WTC11 (cell line): ENCODE measurements at regions of chr2 and their contacts with region 1.

Region 1: GRCh38 chr2:24827321-24828237 is 34.4 kb downstream of the CENPO start:
- DNase-seq: peak; percentile 89
- ATAC-seq: peak; percentile 89
- H3K4me3 Mint-ChIP-seq: no peak overlapping the region
- H3K27ac Mint-ChIP-seq: peak overlapping the region; percentile 90
- H3K4me1 Mint-ChIP-seq: peaks cover 33% of the 10 kb centered on the region
- H3K27me3 Mint-ChIP-seq: no peaks in the 10 kb centered on the region; the same call in 1 of the 2 replicates
- CTCF ChIP-seq: peak; percentile 77

Region 2: GRCh38 chr2:24409700-24410556 is 417.7 kb before region 1 on chr2:
- CTCF ChIA-PET with region 1: interaction called, 26 read pairs
- POLR2A ChIA-PET with region 1: no interaction called
- DNase-seq: peak; percentile 21
- ATAC-seq: peak; percentile 91
- H3K4me3 Mint-ChIP-seq: no peak overlapping the region
- H3K27ac Mint-ChIP-seq: no peak overlapping the region
- H3K4me1 Mint-ChIP-seq: peaks cover 10% of the 10 kb centered on the region
- H3K27me3 Mint-ChIP-seq: no peaks in the 10 kb centered on the region
- CTCF ChIP-seq: peak; percentile 54; the same call in 1 of the 2 replicates

Region 3: DNA sequence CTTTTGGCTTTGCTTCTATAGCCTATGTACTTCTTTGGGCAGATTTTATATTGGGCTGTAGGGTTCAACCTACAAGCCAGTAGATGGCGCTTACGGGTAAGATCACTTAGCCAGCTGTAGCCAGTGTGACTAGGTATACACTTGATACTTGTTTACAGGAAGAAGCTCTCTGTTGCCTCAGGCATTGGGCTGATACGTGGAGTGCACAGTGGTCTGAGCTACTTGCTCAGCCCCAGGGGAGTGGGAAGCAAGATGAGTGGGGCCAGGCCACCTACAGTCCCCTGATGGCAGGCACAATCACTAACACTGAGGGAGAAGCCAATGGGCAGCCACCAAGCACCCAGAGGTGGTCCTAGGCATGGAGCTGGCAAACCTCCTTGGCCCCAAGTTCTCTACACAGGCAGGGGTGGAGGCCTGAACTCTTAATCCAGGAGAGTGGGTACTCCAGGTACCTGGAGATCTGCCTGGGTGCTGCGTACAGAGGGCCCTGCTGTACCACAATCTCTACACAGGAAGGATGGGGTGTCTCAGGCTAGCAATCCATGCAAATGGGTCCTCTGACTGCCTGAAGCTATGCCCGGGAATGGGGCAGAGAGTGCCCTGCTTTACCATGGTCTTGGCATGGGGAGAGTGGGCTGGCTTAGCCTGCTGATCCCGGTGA is 214.3 kb before region 1 on chr2:
- CTCF ChIA-PET with region 1: interaction called, 42 read pairs
- POLR2A ChIA-PET with region 1: interaction called, 3 read pairs
- DNase-seq: peak; percentile 46
- ATAC-seq: peak; percentile 93
- H3K4me3 Mint-ChIP-seq: no peak overlapping the region
- H3K27ac Mint-ChIP-seq: peak overlapping the region; percentile 97
- H3K4me1 Mint-ChIP-seq: peaks cover 33% of the 10 kb centered on the region
- H3K27me3 Mint-ChIP-seq: no peaks in the 10 kb centered on the region
- CTCF ChIP-seq: peak; percentile 56; the same call in 1 of the 2 replicates

Region 4: DNA sequence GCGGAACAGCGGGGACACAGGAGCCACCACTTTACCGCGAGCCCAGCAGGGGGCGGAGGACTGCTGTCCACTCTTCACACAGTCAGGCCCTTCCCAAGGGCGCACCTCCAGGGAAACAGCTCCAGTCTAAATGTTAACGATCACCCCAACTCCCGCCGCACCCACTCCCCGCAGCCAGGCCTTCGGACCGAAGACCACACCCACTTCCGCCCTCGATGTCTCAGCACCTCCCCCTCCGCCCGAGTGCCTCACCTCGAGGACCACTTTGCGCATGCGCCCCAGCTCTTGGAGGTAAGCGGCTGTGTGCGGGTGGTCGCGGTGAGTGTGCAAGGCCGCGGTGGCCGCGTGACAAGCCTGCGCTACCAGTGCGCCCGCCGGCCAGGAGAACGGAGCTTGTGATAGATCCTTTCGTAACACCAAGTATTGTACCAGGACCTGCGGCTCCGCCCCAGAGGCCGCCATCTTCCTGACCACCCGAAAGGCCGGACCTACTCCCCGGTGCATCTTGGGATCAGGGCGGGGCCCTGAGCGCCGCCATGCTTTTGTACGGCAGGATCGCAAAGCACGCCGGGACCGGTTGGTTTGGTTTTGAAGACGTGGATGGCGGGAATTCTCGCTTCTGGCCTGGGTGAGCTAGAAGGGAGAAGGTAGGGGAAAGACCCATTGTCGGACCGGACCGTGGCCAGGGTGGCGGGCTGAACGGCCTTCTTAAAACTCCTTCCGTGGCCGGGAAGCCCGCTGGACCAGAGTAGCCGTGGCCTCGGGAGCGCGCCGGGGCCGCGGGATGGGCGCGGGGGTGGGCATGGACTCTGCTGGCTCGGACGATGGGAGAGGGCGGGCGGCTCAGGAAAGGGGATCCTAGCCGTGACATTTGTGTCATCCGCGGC is 34.5 kb before region 1 on chr2 and contains the starts of genes CENPO and PTRHD1:
- CTCF ChIA-PET with region 1: interaction called, 10 read pairs
- POLR2A ChIA-PET with region 1: no interaction called
- DNase-seq: peak; percentile 95
- ATAC-seq: peak; percentile 90
- H3K4me3 Mint-ChIP-seq: peak within 1 kb of the TSS; percentile 97
- H3K27ac Mint-ChIP-seq: peak within 1 kb of the TSS; percentile 99
- H3K4me1 Mint-ChIP-seq: peaks cover 45% of the 10 kb centered on the region
- H3K27me3 Mint-ChIP-seq: 0 out of 2 replicates have a peak, but pooled peaks cover 2% of the 10 kb centered on the region
- CTCF ChIP-seq: no peak
- total RNA-seq, gene CENPO: 35.2 to 38.6 TPM (median 35.2 TPM) in 3 replicates
- total RNA-seq, gene PTRHD1: 37.6 to 43.4 TPM (median 39.2 TPM) in 3 replicates

Region 5: DNA sequence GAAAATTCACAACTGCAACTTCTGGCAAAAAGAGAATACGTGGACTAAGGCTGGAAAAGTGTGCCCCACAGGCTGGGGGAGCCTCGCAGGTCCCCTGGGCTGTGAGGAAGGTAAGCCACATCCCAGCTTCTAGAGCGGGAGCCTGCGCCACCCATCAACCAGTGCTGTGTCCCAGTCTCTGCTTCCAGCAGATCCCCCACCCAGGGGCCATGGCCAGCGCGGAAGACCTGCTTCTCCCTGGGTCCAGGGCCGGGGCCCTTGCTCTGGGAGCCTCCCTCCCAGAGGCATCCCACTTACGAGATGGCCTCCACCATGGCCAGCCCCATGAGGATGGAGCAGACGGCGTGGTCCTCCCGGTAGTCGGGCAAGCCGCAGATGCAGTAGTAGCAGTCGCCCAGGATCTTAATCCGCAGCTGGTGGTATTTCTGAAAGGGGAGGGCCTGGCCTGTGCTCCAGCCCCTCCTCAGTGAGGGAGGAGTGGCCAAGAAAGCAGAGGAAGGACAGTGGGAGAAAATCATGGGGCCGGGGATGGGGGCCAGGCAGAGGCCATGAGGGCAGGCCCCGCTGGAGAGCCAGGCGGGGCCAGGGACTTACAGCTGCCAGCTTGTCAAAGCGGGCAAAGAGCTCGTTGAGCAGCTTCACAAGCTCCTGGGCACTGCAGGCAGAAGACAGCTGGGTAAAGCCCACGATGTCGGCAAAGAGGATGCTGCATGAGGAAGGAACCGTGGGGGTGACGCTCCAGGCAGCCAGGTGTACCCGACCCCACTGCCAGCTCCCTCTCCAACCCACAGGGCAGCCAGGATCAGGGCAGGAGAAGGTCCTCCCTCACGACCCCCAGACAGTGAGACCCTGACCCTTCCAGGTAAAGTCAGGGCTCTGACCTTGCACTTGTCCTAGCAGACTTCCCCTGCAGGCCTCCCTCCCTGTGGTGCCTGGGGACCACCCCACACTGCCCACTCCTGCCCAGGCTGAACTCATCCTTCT is 13.7 kb after region 1 on chr2:
- CTCF ChIA-PET with region 1: interaction called, 10 read pairs
- POLR2A ChIA-PET with region 1: no interaction called
- DNase-seq: no peak
- ATAC-seq: no peak
- H3K4me3 Mint-ChIP-seq: no peak overlapping the region
- H3K27ac Mint-ChIP-seq: peak overlapping the region; percentile 76
- H3K4me1 Mint-ChIP-seq: peaks cover 13% of the 10 kb centered on the region
- H3K27me3 Mint-ChIP-seq: no peaks in the 10 kb centered on the region; the same call in 1 of the 2 replicates
- CTCF ChIP-seq: no peak